HCT116 (cell line): ENCODE measurements at regions of chr18 and their contacts with region 1.

Region 1: GRCh38 chr18:58180738-58181353 is 136.8 kb downstream of the NEDD4L start:
- DNase-seq: no peak
- ATAC-seq: peak; percentile 59
- H3K4me3 ChIP-seq: no peak overlapping the region
- H3K27ac ChIP-seq: no peak overlapping the region
- H3K4me1 ChIP-seq: peaks cover 22 to 31% of the 10 kb centered on the region in 2 experiments
- H3K27me3 ChIP-seq: no peaks in the 10 kb centered on the region
- CTCF ChIP-seq: peak; percentile 78 to 96 (median 83)
- POLR2A ChIP-seq: no peak
- RAD21 ChIP-seq: peak; percentile 84

Region 2: GRCh38 chr18:58101291-58101794 is 79.5 kb before region 1 on chr18:
- CTCF ChIA-PET with region 1: no interaction called
- POLR2A ChIA-PET with region 1: no interaction called
- RAD21 ChIA-PET with region 1: no interaction called
- intact Hi-C with region 1: no loop called
- DNase-seq: no peak
- ATAC-seq: no peak
- H3K4me3 ChIP-seq: no peak overlapping the region
- H3K27ac ChIP-seq: no peak overlapping the region
- H3K4me1 ChIP-seq: peaks cover 0 to 3% of the 10 kb centered on the region in 2 experiments; a peak in 1 of 4 replicates
- H3K27me3 ChIP-seq: no peaks in the 10 kb centered on the region
- CTCF ChIP-seq: no peak
- POLR2A ChIP-seq: no peak
- RAD21 ChIP-seq: no peak

Region 3: GRCh38 chr18:58321986-58322385 is 141.1 kb after region 1 on chr18:
- CTCF ChIA-PET with region 1: interaction called, 10 read pairs
- POLR2A ChIA-PET with region 1: no interaction called
- RAD21 ChIA-PET with region 1: no interaction called
- intact Hi-C with region 1: no loop called
- DNase-seq: peak; percentile 74
- ATAC-seq: peak; percentile 97
- H3K4me3 ChIP-seq: no peak overlapping the region
- H3K27ac ChIP-seq: no peak overlapping the region
- H3K4me1 ChIP-seq: peaks cover 13 to 30% of the 10 kb centered on the region in 2 experiments
- H3K27me3 ChIP-seq: no peaks in the 10 kb centered on the region
- CTCF ChIP-seq: peak; percentile 56 to 73 (median 62)
- POLR2A ChIP-seq: no peak
- RAD21 ChIP-seq: peak; percentile 94